PC-3 (cell line): ENCODE measurements at regions of chr4 and their contacts with region 1.

Region 1: DNA sequence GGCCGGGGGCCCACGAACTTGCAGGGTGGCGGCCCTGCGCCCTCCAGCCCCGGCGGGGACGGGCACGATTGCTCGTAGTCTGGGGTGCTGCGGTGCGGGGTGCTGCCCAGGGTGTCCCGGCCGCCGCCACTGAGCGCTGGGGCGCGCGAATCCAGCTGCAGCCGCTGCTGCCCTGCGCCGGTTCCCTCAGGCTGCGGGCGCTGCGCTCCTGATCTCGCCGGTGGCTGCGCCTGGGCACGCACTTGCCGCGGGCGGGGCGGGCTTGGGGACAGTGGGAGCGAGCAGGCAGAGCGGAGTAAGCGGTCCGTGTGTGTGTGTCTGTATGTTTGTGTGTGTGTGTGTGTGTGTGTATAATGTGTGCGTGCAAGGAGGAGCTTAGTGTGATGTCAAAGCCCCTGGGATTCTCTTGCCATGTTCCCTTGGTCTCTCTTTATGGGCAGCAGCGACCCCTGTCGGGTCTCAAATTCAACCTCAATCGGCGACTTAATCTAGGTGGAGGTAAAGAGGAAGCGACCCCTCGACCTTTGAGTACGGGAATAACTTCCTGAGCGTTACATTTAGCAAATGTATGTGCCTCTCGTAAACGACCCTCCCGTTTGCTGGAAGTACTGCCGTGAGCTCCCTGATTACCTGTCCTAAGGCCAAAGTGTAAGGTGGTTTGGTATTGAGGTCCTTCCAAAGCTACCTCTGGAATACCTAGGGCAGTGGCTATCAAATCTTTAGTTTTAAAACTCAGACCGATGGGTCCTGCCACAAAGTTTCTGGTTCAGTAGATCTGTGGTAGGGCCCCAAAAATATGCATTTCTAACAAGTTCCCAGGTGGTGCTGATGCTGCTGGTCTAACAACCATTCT is at the start of gene RNF150:
- DNase-seq: peak; percentile 79
- ATAC-seq: peak; percentile 75
- H3K4me3 ChIP-seq: peak within 1 kb of the TSS; percentile 78
- H3K27ac ChIP-seq: no peak within 1 kb of the TSS
- H3K4me1 ChIP-seq: peaks cover 4% of the 10 kb centered on the region; the same call in 1 of the 2 replicates
- H3K27me3 ChIP-seq: peaks cover 91% of the 10 kb centered on the region
- CTCF ChIP-seq: peak; percentile 88
- total RNA-seq, gene RNF150: 0.55 and 0.58 TPM in 2 replicates

Region 2: DNA sequence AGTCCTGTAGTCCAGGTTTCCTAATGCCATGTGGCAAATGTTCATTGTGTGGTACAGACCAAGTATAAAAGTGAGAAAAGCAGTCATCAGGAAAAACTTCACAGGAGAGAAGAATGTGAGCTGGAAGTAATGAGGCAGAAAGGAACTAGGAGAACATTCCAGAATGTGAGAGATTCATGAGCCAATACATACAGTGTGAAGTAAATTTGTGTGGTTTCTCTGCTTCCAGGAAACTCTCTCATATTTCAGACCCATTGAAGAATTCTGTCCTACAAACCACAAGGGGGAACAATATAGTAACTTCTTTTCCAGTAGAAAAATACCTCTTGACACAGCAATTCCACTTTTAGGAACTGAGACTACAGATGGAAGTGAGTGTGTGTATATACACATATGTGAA is 136.6 kb before region 1 on chr4:
- CTCF ChIA-PET with region 1: interaction called, 3 read pairs
- POLR2A ChIA-PET with region 1: no interaction called
- intact Hi-C with region 1: loop called (anchors 2 kb)
- DNase-seq: no peak
- ATAC-seq: 0 out of 2 replicates have a peak, but pooled peaks have one; percentile 15
- H3K4me3 ChIP-seq: no peak overlapping the region
- H3K27ac ChIP-seq: no peak overlapping the region
- H3K4me1 ChIP-seq: no peaks in the 10 kb centered on the region
- H3K27me3 ChIP-seq: peaks cover 35% of the 10 kb centered on the region; the same call in 1 of the 2 replicates
- CTCF ChIP-seq: no peak